Colonic mucosa (tissue), 4 donors: ENCODE measurements at regions of chr11 and their contacts with region 1.

Region 1: GRCh38 chr11:76554767-76555166 is 109.9 kb downstream of the EMSY start:
- DNase-seq: no peak
- H3K4me3 ChIP-seq: no peak overlapping the region
- H3K27ac ChIP-seq: peak overlapping the region; percentile 73
- H3K4me1 ChIP-seq: peaks cover 7% of the 10 kb centered on the region
- H3K27me3 ChIP-seq: no peaks in the 10 kb centered on the region
- CTCF ChIP-seq: no peak

Region 2: GRCh38 chr11:76512851-76513653 is 41.7 kb before region 1 on chr11:
- intact Hi-C with region 1: no loop called
- DNase-seq: no peak
- H3K4me3 ChIP-seq: no peak overlapping the region
- H3K27ac ChIP-seq: no peak overlapping the region
- H3K4me1 ChIP-seq: no peaks in the 10 kb centered on the region
- H3K27me3 ChIP-seq: no peaks in the 10 kb centered on the region
- CTCF ChIP-seq: peak; percentile 16

Region 3: DNA sequence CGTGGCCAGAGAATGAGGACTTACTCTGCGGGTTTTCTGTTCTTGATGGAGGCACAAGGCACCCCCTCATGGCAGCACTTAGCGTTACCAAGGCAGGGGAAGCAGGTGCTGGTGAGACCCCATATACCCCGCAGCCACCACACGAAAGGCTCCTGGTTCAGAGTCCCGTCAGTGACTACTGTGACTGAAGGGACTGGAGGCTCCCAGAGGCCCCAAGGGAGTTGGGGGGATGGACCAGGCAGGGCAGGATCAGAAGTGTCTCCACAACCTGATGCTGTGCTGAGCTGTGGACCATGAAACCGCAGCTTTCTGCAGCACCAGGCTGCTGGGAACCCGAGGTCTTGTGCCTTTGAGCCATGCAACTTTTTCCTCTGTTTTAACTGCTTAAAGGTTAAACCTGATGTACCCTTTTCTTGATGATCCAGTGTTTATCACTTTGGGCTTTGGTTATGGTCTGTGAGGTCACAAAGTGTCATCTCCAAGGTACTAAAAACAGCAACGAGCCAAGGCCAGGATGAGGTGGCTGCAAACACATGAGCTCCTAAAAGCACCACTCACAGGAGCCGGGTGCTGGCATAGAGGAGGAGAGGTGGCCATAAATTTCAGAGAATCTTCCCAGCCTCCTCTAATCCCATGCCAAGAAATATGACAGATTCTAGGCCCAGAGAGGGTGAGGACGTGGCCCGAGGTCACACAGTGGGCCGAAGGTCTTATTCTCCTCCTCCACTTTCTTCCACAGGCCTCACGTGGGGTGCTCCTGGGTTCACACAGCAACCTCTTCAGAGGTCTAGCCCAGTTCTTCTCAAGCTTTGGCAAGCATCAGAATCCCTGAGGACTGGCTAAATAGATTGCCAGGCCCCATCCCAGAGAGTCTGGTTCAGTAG is 120.0 kb after region 1 on chr11:
- intact Hi-C with region 1: loop called (anchors 5 kb)
- DNase-seq: no peak
- H3K4me3 ChIP-seq: no peak overlapping the region
- H3K27ac ChIP-seq: no peak overlapping the region
- H3K4me1 ChIP-seq: no peaks in the 10 kb centered on the region
- H3K27me3 ChIP-seq: peaks cover 8% of the 10 kb centered on the region
- CTCF ChIP-seq: no peak